ENCODE measurements at regions of chr17 and their contacts with region 1.

Region 1: DNA sequence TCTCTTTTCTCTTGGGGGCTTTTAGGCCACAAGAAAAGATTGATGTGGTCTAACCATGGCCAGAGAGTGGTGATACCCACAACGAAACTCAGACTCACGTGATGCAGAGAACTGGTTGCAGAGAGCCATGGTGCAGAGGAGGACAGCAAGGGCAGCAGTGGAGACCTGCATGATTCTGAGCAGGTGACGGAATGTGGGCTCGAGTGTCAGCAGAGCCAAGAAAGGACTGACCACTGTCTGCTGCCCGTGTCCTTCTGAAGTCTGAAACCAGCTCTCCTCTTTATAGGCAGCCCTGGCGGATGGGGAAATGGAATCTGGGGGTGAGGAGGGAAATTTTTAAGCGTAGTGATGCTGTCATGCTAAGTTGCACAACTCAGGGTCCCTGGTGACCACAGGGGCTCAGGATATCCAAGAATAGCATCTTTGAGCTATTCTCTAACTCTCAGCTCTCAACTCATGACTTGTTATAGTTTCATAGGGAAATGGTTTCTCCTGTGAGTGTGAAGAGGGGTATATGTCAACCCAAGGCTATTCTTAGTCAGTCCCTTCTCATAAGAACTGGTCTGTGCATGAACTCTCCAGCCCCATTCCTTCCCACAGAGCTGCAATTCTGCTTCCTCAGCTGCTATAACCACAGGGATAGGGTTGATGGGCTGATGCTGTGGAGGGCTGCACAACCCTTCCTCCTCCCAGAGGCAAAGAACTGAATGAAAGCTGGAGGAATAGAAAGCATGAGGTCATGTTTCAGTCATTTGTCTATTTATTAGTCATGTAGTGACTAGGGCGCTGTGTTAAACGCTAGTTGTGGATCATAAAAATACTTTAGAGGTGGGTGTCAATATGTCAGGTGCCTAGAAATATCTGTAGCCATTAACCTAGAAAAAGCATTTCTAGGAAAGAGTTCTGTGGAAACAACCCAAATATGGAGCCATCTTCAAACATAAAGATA is at the start of gene CCL3:
- DNase-seq: peak; percentile 54
- H3K4me3 Mint-ChIP-seq: no peak within 1 kb of the TSS
- H3K27ac Mint-ChIP-seq: peak within 1 kb of the TSS; percentile 68
- H3K4me1 Mint-ChIP-seq: peaks cover 23% of the 10 kb centered on the region
- H3K27me3 Mint-ChIP-seq: peaks cover 25% of the 10 kb centered on the region
- total RNA-seq, gene CCL3: 8.3 TPM

Region 2: GRCh38 chr17:36001862-36002603 is 88.1 kb before region 1 on chr17:
- CTCF ChIA-PET with region 1: no interaction called
- intact Hi-C with region 1: no loop called
- DNase-seq: no peak
- H3K4me3 Mint-ChIP-seq: no peak overlapping the region
- H3K27ac Mint-ChIP-seq: no peak overlapping the region
- H3K4me1 Mint-ChIP-seq: peaks cover 3% of the 10 kb centered on the region
- H3K27me3 Mint-ChIP-seq: peaks cover 12% of the 10 kb centered on the region

Region 3: GRCh38 chr17:36105781-36106492 is 15.8 kb after region 1 on chr17:
- CTCF ChIA-PET with region 1: no interaction called
- intact Hi-C with region 1: no loop called
- DNase-seq: no peak
- H3K4me3 Mint-ChIP-seq: no peak overlapping the region
- H3K27ac Mint-ChIP-seq: no peak overlapping the region
- H3K4me1 Mint-ChIP-seq: peaks cover 4% of the 10 kb centered on the region
- H3K27me3 Mint-ChIP-seq: peaks cover 36% of the 10 kb centered on the region

Region 4: GRCh38 chr17:36117505-36118382 is 27.6 kb after region 1 on chr17:
- CTCF ChIA-PET with region 1: interaction called, 9 read pairs
- intact Hi-C with region 1: loop called (anchors 1 kb)
- DNase-seq: peak; percentile 73
- H3K4me3 Mint-ChIP-seq: no peak overlapping the region
- H3K27ac Mint-ChIP-seq: no peak overlapping the region
- H3K4me1 Mint-ChIP-seq: peaks cover 22% of the 10 kb centered on the region
- H3K27me3 Mint-ChIP-seq: peaks cover 29% of the 10 kb centered on the region

Region 5: GRCh38 chr17:36566081-36566480 is 475.9 kb after region 1 on chr17:
- CTCF ChIA-PET with region 1: no interaction called
- intact Hi-C with region 1: no loop called
- DNase-seq: no peak
- H3K4me3 Mint-ChIP-seq: no peak overlapping the region
- H3K27ac Mint-ChIP-seq: no peak overlapping the region
- H3K4me1 Mint-ChIP-seq: peaks cover 25% of the 10 kb centered on the region
- H3K27me3 Mint-ChIP-seq: no peaks in the 10 kb centered on the region

Region 6: DNA sequence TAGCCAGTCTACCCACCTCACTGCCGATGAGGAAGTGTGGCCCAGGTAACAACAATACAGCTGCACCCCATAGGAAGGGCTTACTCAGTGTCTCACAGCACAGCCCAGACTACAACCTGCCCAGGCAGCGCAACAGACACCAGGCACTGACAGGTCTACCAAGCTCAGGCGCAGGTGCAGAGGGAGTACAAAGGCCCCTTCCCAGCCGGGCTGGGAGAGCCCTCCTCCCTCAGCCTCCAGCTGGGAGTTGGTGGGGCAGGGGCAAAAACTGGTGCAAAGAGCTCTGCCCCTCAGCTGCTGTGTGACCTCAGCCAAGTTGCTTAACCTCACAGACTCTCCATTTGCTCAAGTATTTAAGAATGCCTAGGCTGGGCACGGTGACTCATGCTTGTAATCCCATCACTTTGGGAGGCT is 734.5 kb after region 1 on chr17:
- CTCF ChIA-PET with region 1: no interaction called
- intact Hi-C with region 1: no loop called
- DNase-seq: no peak
- H3K4me3 Mint-ChIP-seq: no peak overlapping the region
- H3K27ac Mint-ChIP-seq: no peak overlapping the region
- H3K4me1 Mint-ChIP-seq: no peaks in the 10 kb centered on the region
- H3K27me3 Mint-ChIP-seq: peaks cover 32% of the 10 kb centered on the region

Measured in activated naive CD4-positive, alpha-beta T cell treated with anti-CD3 and anti-CD28 coated beads for 36 hours (primary cell).